Endothelial cell of umbilical vein (primary cell): ENCODE measurements at regions of chr6 and their contacts with region 1.

Region 1: DNA sequence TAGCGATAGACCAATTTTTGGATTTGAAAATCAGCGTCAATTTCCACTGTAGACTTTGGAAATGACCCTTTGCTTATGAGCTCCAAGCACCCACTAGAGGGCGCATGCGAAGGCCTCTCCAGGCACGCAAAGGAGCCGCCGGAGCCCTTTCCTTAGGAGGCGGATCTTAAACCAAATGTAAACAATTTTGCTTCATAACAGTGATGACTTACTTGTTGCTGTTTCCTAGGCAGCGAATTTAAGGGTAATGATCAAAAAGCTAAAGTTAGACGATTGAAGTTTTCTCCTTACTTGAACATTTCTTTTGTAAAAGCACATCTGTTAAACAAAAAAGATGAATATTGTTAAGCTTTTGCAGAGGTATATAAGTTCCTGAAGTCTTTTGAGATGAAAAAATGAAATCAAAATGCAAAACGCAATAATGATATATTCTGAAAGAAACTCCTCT is 29.2 kb upstream of the EXOC2 start:
- DNase-seq: peak; percentile 77
- H3K4me3 ChIP-seq: no peak overlapping the region
- H3K27ac ChIP-seq: no peak overlapping the region
- H3K4me1 ChIP-seq: no peaks in the 10 kb centered on the region
- H3K27me3 ChIP-seq: no peaks in the 10 kb centered on the region
- CTCF ChIP-seq: peak; percentile 89 to 94
- POLR2A ChIP-seq: no peak

Region 2: DNA sequence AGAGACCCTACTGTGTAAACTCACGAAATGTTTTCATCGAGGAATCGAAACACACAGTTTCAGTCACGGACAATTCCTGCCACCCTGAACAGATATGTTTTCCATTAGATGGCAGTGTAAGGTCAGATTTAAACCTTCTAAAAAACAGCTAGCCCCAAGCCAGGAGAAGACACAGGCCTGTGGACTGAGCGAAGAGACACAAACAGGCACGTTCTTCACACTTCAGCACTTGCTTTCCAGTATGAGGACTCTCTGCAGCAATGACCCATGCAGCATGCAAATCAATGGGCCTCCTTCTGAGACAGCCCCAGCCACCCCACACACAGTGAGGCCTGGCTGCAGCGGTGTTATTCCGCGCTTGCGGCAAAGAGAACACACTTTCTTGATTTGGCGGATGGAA is 97.1 kb before region 1 on chr6:
- CTCF ChIA-PET with region 1: interaction called, 12 read pairs
- POLR2A ChIA-PET with region 1: no interaction called
- dilution Hi-C with region 1: no loop called
- intact Hi-C with region 1: no loop called
- DNase-seq: peak; percentile 7
- H3K4me3 ChIP-seq: no peak overlapping the region
- H3K27ac ChIP-seq: no peak overlapping the region
- H3K4me1 ChIP-seq: no peaks in the 10 kb centered on the region
- H3K27me3 ChIP-seq: no peaks in the 10 kb centered on the region
- CTCF ChIP-seq: no peak
- POLR2A ChIP-seq: no peak

Region 3: GRCh38 chr6:692855-693722 is 29.0 kb before region 1 on chr6 and contains the start of gene EXOC2:
- CTCF ChIA-PET with region 1: interaction called, 14 read pairs
- POLR2A ChIA-PET with region 1: no interaction called
- dilution Hi-C with region 1: no loop called
- intact Hi-C with region 1: loop called (anchors 1 kb)
- DNase-seq: peak; percentile 79
- H3K4me3 ChIP-seq: peak within 1 kb of the TSS; percentile 87 to 90 (median 87)
- H3K27ac ChIP-seq: peak within 1 kb of the TSS; percentile 71
- H3K4me1 ChIP-seq: peaks cover 15% of the 10 kb centered on the region
- H3K27me3 ChIP-seq: no peaks in the 10 kb centered on the region
- CTCF ChIP-seq: no peak
- POLR2A ChIP-seq: no peak
- total RNA-seq, gene EXOC2: 30.8 and 39.7 TPM in 2 replicates

Region 4: GRCh38 chr6:710601-711571 is 11.2 kb before region 1 on chr6:
- CTCF ChIA-PET with region 1: interaction called, 55 read pairs
- POLR2A ChIA-PET with region 1: interaction called, 4 read pairs
- dilution Hi-C with region 1: no loop called
- intact Hi-C with region 1: loop called (anchors 2 kb)
- DNase-seq: peak; percentile 70
- H3K4me3 ChIP-seq: peak overlapping the region; percentile 20 to 43 (median 42)
- H3K27ac ChIP-seq: peak overlapping the region; percentile 88
- H3K4me1 ChIP-seq: peaks cover 79% of the 10 kb centered on the region
- H3K27me3 ChIP-seq: no peaks in the 10 kb centered on the region
- CTCF ChIP-seq: no peak
- POLR2A ChIP-seq: peak; percentile 48

Region 5: GRCh38 chr6:786946-787763 is 65.1 kb after region 1 on chr6:
- CTCF ChIA-PET with region 1: interaction called, 4 read pairs
- POLR2A ChIA-PET with region 1: no interaction called
- dilution Hi-C with region 1: no loop called
- intact Hi-C with region 1: loop called (anchors 2 kb)
- DNase-seq: peak; percentile 29
- H3K4me3 ChIP-seq: no peak overlapping the region
- H3K27ac ChIP-seq: no peak overlapping the region
- H3K4me1 ChIP-seq: no peaks in the 10 kb centered on the region
- H3K27me3 ChIP-seq: no peaks in the 10 kb centered on the region
- CTCF ChIP-seq: peak; percentile 56 to 58
- POLR2A ChIP-seq: no peak

Region 6: DNA sequence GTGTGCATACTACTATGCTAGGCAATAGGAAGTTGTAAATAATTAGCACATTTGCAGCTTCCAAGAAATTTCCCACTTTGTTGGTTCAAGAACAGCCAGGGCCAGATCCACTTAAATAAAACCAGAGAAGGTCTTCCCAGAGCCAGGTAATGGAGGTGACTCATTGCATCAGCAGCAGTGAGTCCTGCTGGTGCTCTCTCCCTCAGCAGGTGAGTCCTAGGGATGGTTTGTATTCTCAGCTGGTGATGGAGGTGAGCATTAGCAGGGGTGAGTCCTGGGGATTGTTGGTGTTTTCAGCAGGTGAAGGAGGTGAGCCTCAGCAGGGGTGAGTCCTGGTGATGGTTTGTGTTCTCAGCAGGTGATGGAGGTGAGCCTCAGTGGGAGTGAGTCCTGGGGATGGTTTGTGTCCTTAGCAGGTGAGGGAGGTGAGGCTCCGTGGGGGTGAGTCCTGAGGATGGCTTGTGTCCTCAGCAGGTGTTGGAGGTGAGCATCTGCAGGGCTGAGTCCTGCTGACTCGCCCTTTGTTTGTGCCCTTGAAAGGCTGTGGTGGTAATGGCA is 203.6 kb after region 1 on chr6:
- CTCF ChIA-PET with region 1: no interaction called
- POLR2A ChIA-PET with region 1: no interaction called
- dilution Hi-C with region 1: no loop called
- intact Hi-C with region 1: no loop called
- DNase-seq: no peak
- H3K4me3 ChIP-seq: no peak overlapping the region
- H3K27ac ChIP-seq: no peak overlapping the region
- H3K4me1 ChIP-seq: no peaks in the 10 kb centered on the region
- H3K27me3 ChIP-seq: no peaks in the 10 kb centered on the region
- CTCF ChIP-seq: no peak
- POLR2A ChIP-seq: no peak

Region 7: GRCh38 chr6:1436334-1437306 is 714.5 kb after region 1 on chr6:
- CTCF ChIA-PET with region 1: interaction called, 19 read pairs
- POLR2A ChIA-PET with region 1: no interaction called
- dilution Hi-C with region 1: no loop called
- intact Hi-C with region 1: loop called (anchors 1 kb)
- DNase-seq: peak; percentile 70
- H3K4me3 ChIP-seq: no peak overlapping the region
- H3K27ac ChIP-seq: no peak overlapping the region
- H3K4me1 ChIP-seq: no peaks in the 10 kb centered on the region
- H3K27me3 ChIP-seq: no peaks in the 10 kb centered on the region
- CTCF ChIP-seq: peak; percentile 56 to 67
- POLR2A ChIP-seq: no peak